ENCODE measurements at regions of chr1 and their contacts with region 1.

Region 1: DNA sequence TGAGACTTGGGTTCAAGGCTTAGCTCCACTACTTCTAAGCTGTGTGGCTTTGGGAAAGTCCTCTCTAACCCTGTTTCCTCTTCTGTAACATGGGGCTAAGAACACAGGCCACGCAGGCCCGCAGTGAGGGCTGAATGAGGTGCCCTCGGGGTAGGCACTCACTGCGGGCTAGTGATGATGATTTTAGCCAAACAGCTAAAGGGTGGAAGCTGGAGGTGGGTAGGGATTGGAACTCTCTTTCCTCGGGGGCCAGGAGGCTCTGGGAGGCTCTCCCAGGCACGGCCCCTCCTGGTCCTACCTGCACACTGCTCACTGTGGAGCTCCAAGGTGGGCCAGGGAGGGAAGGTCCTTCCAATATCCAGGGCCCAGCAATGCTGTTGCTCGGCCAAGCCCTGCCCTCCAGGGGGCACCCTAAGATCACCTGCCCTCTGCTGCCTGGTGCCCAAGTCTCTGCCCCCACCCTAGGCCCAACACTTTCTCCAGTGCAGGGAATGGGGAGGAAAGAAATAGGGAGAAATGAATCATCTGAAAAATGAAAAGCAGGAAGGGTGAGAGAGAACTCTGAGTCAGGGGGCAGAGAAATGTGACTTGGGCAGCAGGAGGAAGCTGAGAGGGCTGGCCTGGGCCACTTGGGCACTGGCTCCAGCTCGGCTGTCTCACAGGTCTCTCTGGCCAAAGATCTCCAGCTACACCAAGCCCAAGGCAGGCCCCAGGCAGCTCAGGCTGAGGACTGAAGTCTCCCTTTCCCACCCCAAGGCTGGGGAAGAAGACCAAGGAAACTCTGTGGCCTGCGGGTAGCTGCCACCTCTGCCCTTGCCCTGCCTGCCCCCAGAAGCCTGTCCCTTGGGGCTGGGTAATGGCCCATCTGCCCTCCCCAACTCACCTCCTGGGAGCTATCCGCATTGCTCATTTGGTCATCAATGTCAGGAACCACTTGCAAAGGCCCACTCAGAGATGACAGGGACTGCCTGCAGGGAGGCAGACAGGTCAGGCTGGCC is 19.3 kb upstream of the EVA1B start:
- DNase-seq: peak; percentile 47
- ATAC-seq: peak; percentile 89
- H3K4me3 Mint-ChIP-seq: no peak overlapping the region
- H3K27ac Mint-ChIP-seq: peak overlapping the region; percentile 50
- H3K4me1 Mint-ChIP-seq: peaks cover 3% of the 10 kb centered on the region
- H3K27me3 Mint-ChIP-seq: no peaks in the 10 kb centered on the region
- CTCF ChIP-seq: no peak

Region 2: GRCh38 chr1:35810096-35810881 is 532.5 kb before region 1 on chr1:
- CTCF ChIA-PET with region 1: no interaction called
- POLR2A ChIA-PET with region 1: no interaction called
- intact Hi-C with region 1: no loop called
- DNase-seq: no peak
- ATAC-seq: no peak
- H3K4me3 Mint-ChIP-seq: peak overlapping the region; percentile 88
- H3K27ac Mint-ChIP-seq: no peak overlapping the region
- H3K4me1 Mint-ChIP-seq: peaks cover 24% of the 10 kb centered on the region
- H3K27me3 Mint-ChIP-seq: no peaks in the 10 kb centered on the region
- CTCF ChIP-seq: no peak

Region 3: GRCh38 chr1:36142121-36142520 is 200.7 kb before region 1 on chr1:
- CTCF ChIA-PET with region 1: no interaction called
- POLR2A ChIA-PET with region 1: no interaction called
- intact Hi-C with region 1: no loop called
- DNase-seq: no peak
- ATAC-seq: no peak
- H3K4me3 Mint-ChIP-seq: no peak overlapping the region
- H3K27ac Mint-ChIP-seq: no peak overlapping the region
- H3K4me1 Mint-ChIP-seq: peaks cover 19% of the 10 kb centered on the region
- H3K27me3 Mint-ChIP-seq: no peaks in the 10 kb centered on the region
- CTCF ChIP-seq: no peak

Region 4: GRCh38 chr1:36306902-36307456 is 35.8 kb before region 1 on chr1:
- CTCF ChIA-PET with region 1: interaction called, 3 read pairs
- POLR2A ChIA-PET with region 1: no interaction called
- intact Hi-C with region 1: loop called (anchors 5 kb)
- DNase-seq: peak; percentile 94
- ATAC-seq: peak; percentile 98
- H3K4me3 Mint-ChIP-seq: peak overlapping the region; percentile 97
- H3K27ac Mint-ChIP-seq: peak overlapping the region; percentile 88
- H3K4me1 Mint-ChIP-seq: peaks cover 40% of the 10 kb centered on the region
- H3K27me3 Mint-ChIP-seq: no peaks in the 10 kb centered on the region
- CTCF ChIP-seq: no peak

Region 5: DNA sequence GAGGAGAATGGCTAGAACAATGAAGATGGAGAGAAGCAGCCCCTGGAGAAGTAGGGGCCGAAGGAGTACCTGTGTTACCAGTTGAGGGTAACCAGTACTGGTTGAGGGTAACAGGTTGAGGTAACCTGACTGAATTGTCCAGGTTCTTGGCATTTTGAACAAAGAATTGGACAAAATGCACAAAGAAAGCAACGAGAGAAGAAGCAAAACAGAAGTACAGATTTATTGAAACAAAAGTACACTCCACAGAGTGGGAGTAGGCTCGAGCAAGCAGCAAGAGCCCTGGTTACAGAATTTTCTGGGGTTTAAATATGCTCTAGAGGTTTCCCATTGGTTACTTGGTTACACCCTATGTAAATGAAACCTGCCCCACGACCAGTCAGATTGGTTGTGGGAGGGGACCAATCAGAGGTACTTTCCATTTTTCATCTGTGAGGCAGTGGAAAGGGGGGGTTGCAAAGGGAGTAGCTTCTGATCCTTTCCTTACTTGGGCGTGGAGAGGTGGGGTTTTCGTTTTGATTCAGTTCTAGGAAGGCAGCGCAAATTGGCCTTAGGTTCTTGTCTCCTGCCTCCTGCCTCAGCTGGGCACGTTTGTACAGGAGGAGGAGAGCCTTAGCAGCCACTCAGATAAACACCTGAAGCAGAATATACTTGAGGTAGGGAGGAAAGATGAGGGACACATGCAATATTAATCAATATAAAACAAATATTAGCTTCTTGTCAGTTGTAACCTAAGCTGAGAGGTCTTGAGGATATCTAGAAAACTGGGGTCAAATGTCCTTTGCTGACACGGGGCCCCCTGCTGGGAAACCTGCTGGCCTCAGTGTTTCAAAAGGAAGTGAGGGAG is 69.1 kb after region 1 on chr1:
- CTCF ChIA-PET with region 1: interaction called, 13 read pairs
- POLR2A ChIA-PET with region 1: interaction called, 9 read pairs
- intact Hi-C with region 1: no loop called
- DNase-seq: no peak
- ATAC-seq: peak; percentile 89
- H3K4me3 Mint-ChIP-seq: no peak overlapping the region
- H3K27ac Mint-ChIP-seq: no peak overlapping the region
- H3K4me1 Mint-ChIP-seq: peaks cover 24% of the 10 kb centered on the region
- H3K27me3 Mint-ChIP-seq: no peaks in the 10 kb centered on the region
- CTCF ChIP-seq: no peak

Measured in activated B cell treated with CpG ODN at 0.5 μM for 24 hours (primary cell).